ENCODE measurements at regions of chr17 and their contacts with region 1.

Region 1: GRCh38 chr17:37661400-37662014 is 18.3 kb upstream of the DDX52 start:
- DNase-seq: no peak
- H3K4me3 ChIP-seq: no peak overlapping the region
- H3K4me3 Mint-ChIP-seq: no peak overlapping the region
- H3K27ac ChIP-seq: no peak overlapping the region
- H3K27ac Mint-ChIP-seq: no peak overlapping the region
- H3K4me1 ChIP-seq: no peaks in the 10 kb centered on the region
- H3K4me1 Mint-ChIP-seq: no peaks in the 10 kb centered on the region
- H3K27me3 ChIP-seq: no peaks in the 10 kb centered on the region
- H3K27me3 Mint-ChIP-seq: peaks cover 1 to 5% (median 2%) of the 10 kb centered on the region in 3 donors
- CTCF ChIP-seq: no peak

Region 2: GRCh38 chr17:37447641-37448040 is 213.9 kb before region 1 on chr17:
- intact Hi-C with region 1: no loop called
- DNase-seq: no peak
- H3K4me3 ChIP-seq: no peak overlapping the region
- H3K4me3 Mint-ChIP-seq: no peak overlapping the region
- H3K27ac ChIP-seq: no peak overlapping the region
- H3K27ac Mint-ChIP-seq: no peak overlapping the region
- H3K4me1 ChIP-seq: no peaks in the 10 kb centered on the region
- H3K4me1 Mint-ChIP-seq: no peaks in the 10 kb centered on the region
- H3K27me3 ChIP-seq: no peaks in the 10 kb centered on the region
- H3K27me3 Mint-ChIP-seq: no peaks in the 10 kb centered on the region
- CTCF ChIP-seq: no peak

Region 3: GRCh38 chr17:37483311-37484039 is 178.0 kb before region 1 on chr17:
- intact Hi-C with region 1: no loop called
- DNase-seq: no peak
- H3K4me3 ChIP-seq: no peak overlapping the region
- H3K4me3 Mint-ChIP-seq: no peak overlapping the region
- H3K27ac ChIP-seq: no peak overlapping the region
- H3K27ac Mint-ChIP-seq: no peak overlapping the region
- H3K4me1 ChIP-seq: peaks cover 4 to 5% of the 10 kb centered on the region in 2 donors
- H3K4me1 Mint-ChIP-seq: peaks cover 8% of the 10 kb centered on the region
- H3K27me3 ChIP-seq: peaks cover 0 to 8% of the 10 kb centered on the region in 2 donors
- H3K27me3 Mint-ChIP-seq: peaks cover 2 to 11% (median 5%) of the 10 kb centered on the region in 3 donors
- CTCF ChIP-seq: no peak

Region 4: GRCh38 chr17:37598145-37598544 is 63.4 kb before region 1 on chr17:
- intact Hi-C with region 1: no loop called
- DNase-seq: no peak
- H3K4me3 ChIP-seq: no peak overlapping the region
- H3K4me3 Mint-ChIP-seq: no peak overlapping the region
- H3K27ac ChIP-seq: no peak overlapping the region
- H3K27ac Mint-ChIP-seq: peak overlapping the region in 1 of 7 donors; percentile 4
- H3K4me1 ChIP-seq: no peaks in the 10 kb centered on the region
- H3K4me1 Mint-ChIP-seq: peaks cover 2% of the 10 kb centered on the region
- H3K27me3 ChIP-seq: no peaks in the 10 kb centered on the region
- H3K27me3 Mint-ChIP-seq: peaks cover 0 to 1% (median 0%) of the 10 kb centered on the region in 3 donors
- CTCF ChIP-seq: no peak

Region 5: DNA sequence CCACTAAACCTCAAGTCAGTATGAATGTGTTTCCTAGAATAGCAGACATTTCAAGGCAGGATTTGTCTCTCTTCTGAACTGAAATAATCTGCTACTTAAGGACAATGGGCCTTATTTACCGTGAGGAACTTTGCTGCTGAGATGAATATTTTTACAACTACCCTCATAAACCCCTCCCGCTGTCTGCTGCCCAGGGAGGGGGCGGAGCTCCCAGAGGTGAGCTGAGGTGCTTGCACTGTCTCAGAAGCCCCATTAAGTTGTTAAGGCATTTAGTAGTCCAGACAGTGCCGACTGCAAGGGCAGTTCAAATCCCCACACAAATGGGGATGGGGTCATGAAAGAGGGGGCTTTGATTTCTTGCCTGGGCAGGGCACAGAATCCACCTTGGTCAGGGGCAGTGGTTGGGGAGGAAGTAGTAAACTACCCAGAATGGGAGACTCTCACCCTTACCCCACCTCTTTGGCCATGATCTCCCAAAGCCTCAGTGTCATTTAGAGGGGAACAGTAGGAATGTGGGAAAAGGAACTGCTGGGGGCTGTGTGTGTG is 64.2 kb after region 1 on chr17:
- intact Hi-C with region 1: loop called in 1 of 2 experiments (anchors 10 kb)
- DNase-seq: no peak
- H3K4me3 ChIP-seq: no peak overlapping the region
- H3K4me3 Mint-ChIP-seq: no peak overlapping the region
- H3K27ac ChIP-seq: no peak overlapping the region
- H3K27ac Mint-ChIP-seq: no peak overlapping the region
- H3K4me1 ChIP-seq: no peaks in the 10 kb centered on the region
- H3K4me1 Mint-ChIP-seq: no peaks in the 10 kb centered on the region
- H3K27me3 ChIP-seq: no peaks in the 10 kb centered on the region
- H3K27me3 Mint-ChIP-seq: peaks cover 6 to 11% (median 9%) of the 10 kb centered on the region in 3 donors
- CTCF ChIP-seq: no peak

Measured in CD14-positive monocyte (primary cell).